T-cell (primary cell): ENCODE measurements at regions of chr4 and their contacts with region 1.

Region 1: GRCh38 chr4:142353149-142353738 is 492.9 kb downstream of the INPP4B start:
- DNase-seq: peak in 5 of 35 experiments; percentile 2 to 72 (median 21)
- ATAC-seq: peak in 2 of 4 experiments; percentile 24 to 34
- H3K4me3 ChIP-seq: no peak overlapping the region
- H3K4me3 Mint-ChIP-seq: peak overlapping the region; percentile 37 to 74 (median 62)
- H3K27ac ChIP-seq: peak overlapping the region; percentile 36
- H3K27ac Mint-ChIP-seq: peak overlapping the region; percentile 92 to 97
- H3K4me1 ChIP-seq: peaks cover 35 to 37% of the 10 kb centered on the region in 2 experiments
- H3K4me1 Mint-ChIP-seq: peaks cover 95 to 96% (median 96%) of the 10 kb centered on the region in 3 donors
- H3K27me3 ChIP-seq: no peaks in the 10 kb centered on the region
- H3K27me3 Mint-ChIP-seq: no peaks in the 10 kb centered on the region

Region 2: GRCh38 chr4:142334931-142335330 is 18.3 kb before region 1 on chr4:
- CTCF ChIA-PET with region 1: interaction called, 4 to 10 read pairs
- POLR2A ChIA-PET with region 1: interaction called in 1 of 2 experiments, 3 read pairs
- DNase-seq: no peak
- ATAC-seq: no peak
- H3K4me3 ChIP-seq: no peak overlapping the region
- H3K4me3 Mint-ChIP-seq: no peak overlapping the region
- H3K27ac ChIP-seq: no peak overlapping the region
- H3K27ac Mint-ChIP-seq: no peak overlapping the region
- H3K4me1 ChIP-seq: peaks cover 0 to 13% of the 10 kb centered on the region in 2 experiments
- H3K4me1 Mint-ChIP-seq: peaks cover 55 to 72% (median 57%) of the 10 kb centered on the region in 3 donors
- H3K27me3 ChIP-seq: no peaks in the 10 kb centered on the region
- H3K27me3 Mint-ChIP-seq: no peaks in the 10 kb centered on the region

Region 3: GRCh38 chr4:142405021-142405694 is 51.9 kb after region 1 on chr4:
- CTCF ChIA-PET with region 1: interaction called, 5 to 11 read pairs
- POLR2A ChIA-PET with region 1: interaction called in 1 of 2 experiments, 7 read pairs
- DNase-seq: peak; percentile 5 to 75 (median 34)
- ATAC-seq: peak; percentile 39 to 66 (median 57)
- H3K4me3 ChIP-seq: peak overlapping the region; percentile 56 to 81
- H3K4me3 Mint-ChIP-seq: peak overlapping the region; percentile 84 to 94 (median 94)
- H3K27ac ChIP-seq: peak overlapping the region; percentile 83
- H3K27ac Mint-ChIP-seq: peak overlapping the region; percentile 98 to 99
- H3K4me1 ChIP-seq: peaks cover 34 to 41% of the 10 kb centered on the region in 2 experiments
- H3K4me1 Mint-ChIP-seq: peaks cover 64 to 74% (median 68%) of the 10 kb centered on the region in 3 donors
- H3K27me3 ChIP-seq: no peaks in the 10 kb centered on the region
- H3K27me3 Mint-ChIP-seq: no peaks in the 10 kb centered on the region

Region 4: GRCh38 chr4:142567199-142567598 is 214.0 kb after region 1 on chr4:
- CTCF ChIA-PET with region 1: interaction called, 3 to 46 read pairs
- POLR2A ChIA-PET with region 1: interaction called in 1 of 2 experiments, 3 read pairs
- DNase-seq: peak in 34 of 35 experiments; percentile 8 to 80 (median 29)
- ATAC-seq: peak; percentile 73 to 79 (median 77)
- H3K4me3 ChIP-seq: peak overlapping the region in 1 of 2 donors; percentile 51
- H3K4me3 Mint-ChIP-seq: peak overlapping the region; percentile 82 to 90 (median 86)
- H3K27ac ChIP-seq: peak overlapping the region; percentile 80
- H3K27ac Mint-ChIP-seq: peak overlapping the region; percentile 95 to 96
- H3K4me1 ChIP-seq: peaks cover 3 to 6% of the 10 kb centered on the region in 2 experiments
- H3K4me1 Mint-ChIP-seq: peaks cover 65 to 78% (median 73%) of the 10 kb centered on the region in 3 donors
- H3K27me3 ChIP-seq: no peaks in the 10 kb centered on the region
- H3K27me3 Mint-ChIP-seq: no peaks in the 10 kb centered on the region